Activated T-helper 2 cell treated with anti-CD3 and anti-CD28 coated beads, Interferon-gamma antibody, Interleukin-2, Interleukin-4, amounts not matched to agents 10 μg/mL and 5 μg/mL and 100 μg/mL, durations not matched to agents 14 hours and 24 hours and 36 hours (primary cell): ENCODE measurements at regions of chr6 and their contacts with region 1.

Region 1: DNA sequence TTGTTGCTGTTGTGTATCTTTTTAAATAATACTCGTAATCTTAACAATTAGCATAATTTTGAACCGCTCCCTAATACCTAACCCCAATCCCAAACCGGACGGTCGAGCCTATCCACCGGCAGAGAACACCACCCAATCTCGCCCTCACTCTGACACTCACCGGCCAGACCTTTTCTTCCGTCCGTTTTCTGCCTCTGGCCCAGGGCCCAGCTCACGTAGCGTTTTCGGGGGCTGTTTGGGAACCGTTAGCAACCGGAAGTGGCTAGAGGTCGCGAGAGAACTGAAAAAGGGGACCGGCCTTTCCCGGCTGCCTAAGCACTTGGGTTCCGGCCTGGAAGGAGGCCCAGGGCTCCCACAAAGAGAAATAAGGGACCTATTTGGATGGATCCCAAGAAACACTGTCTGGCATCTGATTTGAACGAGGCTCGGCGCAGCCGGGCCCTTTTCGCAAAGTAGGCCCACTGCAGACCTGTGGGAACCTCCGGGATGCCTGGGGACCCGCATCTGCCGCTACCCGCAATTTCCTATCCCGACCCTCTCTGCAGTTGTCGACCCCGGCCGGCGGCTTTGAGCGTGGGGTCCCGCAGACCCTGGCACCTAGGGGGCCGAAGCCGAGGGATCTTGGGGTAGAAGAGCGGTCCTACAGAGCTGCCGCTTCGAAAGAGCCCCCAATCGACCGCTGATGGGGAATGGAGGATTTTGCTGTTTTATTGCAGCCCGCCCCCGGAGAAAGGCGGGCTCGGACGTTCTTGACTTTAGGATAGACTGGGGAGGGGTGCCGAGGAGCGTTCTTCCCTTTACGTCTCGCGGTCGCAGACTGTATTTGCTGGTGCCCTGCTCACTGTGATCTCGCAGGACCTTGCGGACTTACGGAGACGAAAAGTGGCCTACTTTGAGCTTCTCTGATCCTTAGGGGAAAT is 4.8 kb upstream of the ZKSCAN8 start:
- DNase-seq: peak; percentile 68
- H3K4me3 Mint-ChIP-seq: peak overlapping the region; percentile 98
- H3K27ac Mint-ChIP-seq: peak overlapping the region; percentile 98
- H3K4me1 Mint-ChIP-seq: peaks cover 59% of the 10 kb centered on the region
- H3K27me3 Mint-ChIP-seq: no peaks in the 10 kb centered on the region

Region 2: GRCh38 chr6:28080631-28081485 is 56.0 kb before region 1 on chr6:
- intact Hi-C with region 1: loop called (anchors 1 kb)
- DNase-seq: peak; percentile 82
- H3K4me3 Mint-ChIP-seq: peak overlapping the region; percentile 93
- H3K27ac Mint-ChIP-seq: peak overlapping the region; percentile 93
- H3K4me1 Mint-ChIP-seq: peaks cover 13% of the 10 kb centered on the region
- H3K27me3 Mint-ChIP-seq: no peaks in the 10 kb centered on the region

Region 3: DNA sequence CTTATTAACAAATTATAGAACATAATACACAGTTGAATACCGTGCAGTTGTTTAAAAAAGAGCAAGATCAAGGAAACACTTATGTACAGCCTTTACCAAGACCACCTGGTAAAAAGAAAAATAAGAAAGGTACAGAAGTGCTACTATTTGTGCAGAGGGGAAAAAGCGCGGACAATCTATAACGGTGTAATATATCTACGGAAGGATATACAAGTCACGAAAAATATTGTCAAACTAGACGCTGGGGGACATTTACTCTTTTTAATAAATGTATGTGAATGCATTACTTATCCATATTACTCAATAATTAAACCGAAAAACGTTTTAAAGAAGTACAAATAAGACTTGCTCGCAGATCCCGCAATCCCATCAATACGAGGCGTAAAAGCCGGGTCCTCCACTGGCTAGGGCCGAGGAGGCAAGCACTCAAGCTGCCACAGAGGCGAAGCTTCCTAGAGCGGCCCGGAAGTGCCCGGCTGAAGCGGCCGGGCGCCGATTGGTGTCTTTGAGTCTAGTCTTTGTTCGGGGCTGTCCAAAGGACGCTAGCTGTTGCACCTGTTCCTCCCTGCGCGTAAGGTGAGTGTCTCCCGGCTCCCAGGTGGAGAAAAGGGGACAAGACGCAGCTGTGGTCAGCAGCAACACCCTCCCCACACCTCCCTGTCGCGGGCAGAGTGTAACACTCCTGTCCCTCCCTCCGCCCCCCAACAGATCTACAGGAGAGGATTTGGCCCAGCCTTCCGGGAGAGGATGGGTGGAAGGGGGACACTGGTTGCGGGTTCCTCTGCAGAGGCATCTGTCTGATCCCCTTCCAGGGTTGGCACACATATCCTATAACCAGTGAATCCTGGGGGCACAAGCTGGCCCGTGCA is 12.5 kb before region 1 on chr6 and contains the start of gene ZSCAN16:
- intact Hi-C with region 1: loop called (anchors 1 kb)
- DNase-seq: peak; percentile 68
- H3K4me3 Mint-ChIP-seq: peak within 1 kb of the TSS; percentile 92
- H3K27ac Mint-ChIP-seq: peak within 1 kb of the TSS; percentile 75
- H3K4me1 Mint-ChIP-seq: peaks cover 35% of the 10 kb centered on the region
- H3K27me3 Mint-ChIP-seq: no peaks in the 10 kb centered on the region
- total RNA-seq, gene ZSCAN16: 4.0 TPM in 2 replicates

Region 4: GRCh38 chr6:28188111-28188979 is 51.5 kb after region 1 on chr6:
- intact Hi-C with region 1: no loop called
- DNase-seq: no peak
- H3K4me3 Mint-ChIP-seq: no peak overlapping the region
- H3K27ac Mint-ChIP-seq: no peak overlapping the region
- H3K4me1 Mint-ChIP-seq: no peaks in the 10 kb centered on the region
- H3K27me3 Mint-ChIP-seq: no peaks in the 10 kb centered on the region

Region 5: DNA sequence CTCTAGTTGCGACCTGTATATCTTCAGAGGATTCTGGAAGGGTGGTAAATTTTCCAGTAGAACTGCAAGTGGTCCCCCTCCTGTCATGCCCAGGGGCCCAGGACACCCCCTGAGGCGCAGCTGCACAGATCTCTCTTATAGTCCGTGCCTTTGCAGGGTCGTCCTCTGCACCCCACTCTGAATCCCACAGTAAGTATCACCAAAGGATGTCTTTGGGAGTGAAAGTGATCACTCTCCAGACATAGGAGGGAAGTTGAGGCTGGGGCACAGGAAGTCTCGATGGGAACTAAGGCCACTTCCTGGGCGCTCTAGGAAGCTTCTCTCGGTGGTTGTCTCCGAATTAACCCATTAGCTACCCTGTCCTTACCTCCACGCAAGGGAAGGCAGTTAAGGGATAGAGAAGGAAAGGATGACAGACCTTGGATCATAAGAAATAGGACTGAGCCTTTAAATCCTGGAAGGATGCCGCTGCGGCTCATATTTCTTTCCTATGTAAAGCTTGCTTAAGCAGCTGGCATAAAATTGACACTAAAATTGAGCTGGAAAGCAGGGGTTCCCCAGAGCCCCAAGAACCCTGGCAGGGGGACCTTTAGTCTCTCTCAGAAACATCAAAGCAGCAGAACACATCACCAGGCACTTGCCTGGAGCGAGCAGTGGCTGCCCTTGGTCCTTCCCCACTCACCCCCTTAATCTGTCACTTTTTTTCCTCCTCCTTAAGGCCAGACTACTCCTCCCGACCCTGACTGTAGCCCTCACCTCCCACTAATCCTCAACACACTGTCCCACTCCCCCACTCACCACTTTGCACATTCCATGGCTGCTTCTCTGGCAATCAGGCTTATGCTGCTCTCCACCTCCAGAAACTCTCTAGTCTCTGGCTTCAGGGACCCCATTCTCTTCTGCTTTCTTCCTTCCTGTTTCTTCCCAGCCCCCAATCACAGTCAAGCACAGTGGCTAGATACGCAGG is 115.4 kb after region 1 on chr6 and contains the start of gene ZKSCAN4:
- intact Hi-C with region 1: loop called (anchors 2 kb)
- DNase-seq: peak; percentile 67
- H3K4me3 Mint-ChIP-seq: peak within 1 kb of the TSS; percentile 98
- H3K27ac Mint-ChIP-seq: peak within 1 kb of the TSS; percentile 78
- H3K4me1 Mint-ChIP-seq: peaks cover 13% of the 10 kb centered on the region
- H3K27me3 Mint-ChIP-seq: no peaks in the 10 kb centered on the region
- total RNA-seq, gene ZKSCAN4: 4.6 and 5.0 TPM in 2 replicates

Region 6: DNA sequence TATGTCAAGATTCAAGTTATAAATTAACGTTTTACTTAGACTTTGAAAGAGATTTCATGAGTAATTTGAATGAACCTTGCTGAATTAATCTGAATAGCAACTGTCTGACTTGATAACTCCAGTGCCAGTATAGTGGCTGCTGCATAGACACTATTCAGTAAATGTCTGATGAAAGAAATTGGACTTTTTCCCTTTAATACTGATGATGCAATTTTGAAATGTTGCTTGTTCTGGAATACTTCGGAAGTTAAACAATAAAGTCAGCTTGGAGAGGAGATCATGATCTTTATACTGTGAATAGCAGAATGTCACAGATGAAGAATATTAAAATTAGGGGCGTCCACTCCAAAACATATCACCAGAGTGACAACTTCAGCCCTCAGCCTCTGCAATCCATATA is 140.9 kb after region 1 on chr6:
- intact Hi-C with region 1: no loop called
- DNase-seq: no peak
- H3K4me3 Mint-ChIP-seq: no peak overlapping the region
- H3K27ac Mint-ChIP-seq: no peak overlapping the region
- H3K4me1 Mint-ChIP-seq: peaks cover 15% of the 10 kb centered on the region
- H3K27me3 Mint-ChIP-seq: no peaks in the 10 kb centered on the region

Region 7: GRCh38 chr6:28335564-28336283 is 198.9 kb after region 1 on chr6 and contains the start of gene ZSCAN31:
- intact Hi-C with region 1: loop called (anchors 5 kb)
- DNase-seq: peak; percentile 70
- H3K4me3 Mint-ChIP-seq: no peak within 1 kb of the TSS
- H3K27ac Mint-ChIP-seq: no peak within 1 kb of the TSS
- H3K4me1 Mint-ChIP-seq: peaks cover 4% of the 10 kb centered on the region
- H3K27me3 Mint-ChIP-seq: peaks cover 2% of the 10 kb centered on the region
- total RNA-seq, gene ZSCAN31: 1.5 and 1.9 TPM in 2 replicates

Region 8: GRCh38 chr6:28399350-28400121 is 262.7 kb after region 1 on chr6 and contains the start of gene ZSCAN12:
- intact Hi-C with region 1: loop called (anchors 1 kb)
- DNase-seq: peak; percentile 74
- H3K4me3 Mint-ChIP-seq: peak within 1 kb of the TSS; percentile 90
- H3K27ac Mint-ChIP-seq: peak within 1 kb of the TSS; percentile 73
- H3K4me1 Mint-ChIP-seq: peaks cover 36% of the 10 kb centered on the region
- H3K27me3 Mint-ChIP-seq: peaks cover 34% of the 10 kb centered on the region
- total RNA-seq, gene ZSCAN12: 5.3 and 5.7 TPM in 2 replicates